Activated CD4-positive, alpha-beta memory T cell treated with anti-CD3 and anti-CD28 coated beads for 36 hours (primary cell): ENCODE measurements at regions of chr13 and their contacts with region 1.

Region 1: GRCh38 chr13:30968846-30969245 is 36.4 kb downstream of the TEX26 start:
- DNase-seq: no peak
- H3K4me3 Mint-ChIP-seq: no peak overlapping the region
- H3K27ac Mint-ChIP-seq: no peak overlapping the region
- H3K4me1 Mint-ChIP-seq: no peaks in the 10 kb centered on the region
- H3K27me3 Mint-ChIP-seq: peaks cover 26% of the 10 kb centered on the region

Region 2: DNA sequence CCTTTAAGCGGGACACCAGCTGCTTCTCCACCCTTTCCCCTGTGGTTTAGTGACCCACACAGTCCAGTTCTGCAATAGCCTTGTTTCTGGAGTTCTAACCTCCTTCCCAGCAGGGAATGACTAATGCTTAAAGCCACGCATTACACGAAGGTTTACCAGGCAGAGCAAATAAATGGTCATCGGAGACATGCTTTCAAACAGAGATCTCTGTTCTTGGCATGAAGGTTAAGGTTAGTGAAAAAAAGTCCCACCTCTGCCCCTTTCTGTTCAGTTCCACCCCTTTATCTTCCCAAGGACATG is 88.0 kb before region 1 on chr13:
- CTCF ChIA-PET with region 1: no interaction called
- POLR2A ChIA-PET with region 1: no interaction called
- intact Hi-C with region 1: no loop called
- DNase-seq: no peak
- H3K4me3 Mint-ChIP-seq: no peak overlapping the region
- H3K27ac Mint-ChIP-seq: no peak overlapping the region
- H3K4me1 Mint-ChIP-seq: peaks cover 13% of the 10 kb centered on the region
- H3K27me3 Mint-ChIP-seq: peaks cover 16% of the 10 kb centered on the region

Region 3: DNA sequence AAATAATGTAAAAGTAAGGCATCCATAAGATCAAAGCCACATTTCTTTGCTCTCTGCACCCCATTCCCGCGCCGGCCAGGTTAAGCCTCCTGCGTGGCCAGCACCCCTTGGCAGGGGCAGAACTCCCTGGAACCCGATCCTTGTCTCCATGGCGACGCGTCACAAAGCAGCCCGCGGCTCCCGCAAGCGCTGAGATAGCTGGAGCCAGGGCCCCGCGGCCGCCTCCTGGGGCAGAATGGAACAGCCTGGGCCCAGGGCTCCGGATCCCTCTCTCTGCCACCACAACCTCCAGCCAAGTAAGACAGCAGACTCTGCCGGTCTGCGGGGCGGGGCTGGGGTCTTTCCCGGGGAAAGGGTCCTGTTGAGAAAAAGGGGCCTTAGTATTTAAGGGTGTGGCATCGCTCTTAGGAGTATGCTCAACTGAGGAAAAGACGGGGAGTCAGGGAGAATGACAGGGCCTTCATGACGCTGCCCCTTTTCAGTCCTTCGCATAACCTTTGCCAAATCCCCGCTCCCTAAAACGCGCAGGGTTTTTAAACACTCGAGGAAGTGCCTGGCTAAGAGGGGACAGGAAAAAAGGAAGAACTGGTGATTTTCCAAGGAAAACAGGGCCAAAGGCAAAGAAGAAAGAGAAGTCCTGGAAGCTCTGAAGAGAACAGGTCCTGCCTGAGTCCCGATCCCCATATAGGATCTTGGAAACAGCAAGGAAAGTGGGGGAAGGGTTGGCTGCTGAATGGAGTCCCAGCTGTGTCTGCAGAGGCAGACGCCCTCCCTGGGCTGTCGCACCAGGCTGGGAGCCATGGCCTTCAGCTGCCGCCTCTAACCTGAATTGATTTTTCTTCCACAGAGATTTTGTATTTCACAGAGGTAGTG is 36.1 kb before region 1 on chr13 and contains the start of gene TEX26:
- CTCF ChIA-PET with region 1: no interaction called
- POLR2A ChIA-PET with region 1: no interaction called
- intact Hi-C with region 1: no loop called
- DNase-seq: no peak
- H3K4me3 Mint-ChIP-seq: no peak within 1 kb of the TSS
- H3K27ac Mint-ChIP-seq: no peak within 1 kb of the TSS
- H3K4me1 Mint-ChIP-seq: no peaks in the 10 kb centered on the region
- H3K27me3 Mint-ChIP-seq: peaks cover 42% of the 10 kb centered on the region
- total RNA-seq, gene TEX26: not detected

Region 4: DNA sequence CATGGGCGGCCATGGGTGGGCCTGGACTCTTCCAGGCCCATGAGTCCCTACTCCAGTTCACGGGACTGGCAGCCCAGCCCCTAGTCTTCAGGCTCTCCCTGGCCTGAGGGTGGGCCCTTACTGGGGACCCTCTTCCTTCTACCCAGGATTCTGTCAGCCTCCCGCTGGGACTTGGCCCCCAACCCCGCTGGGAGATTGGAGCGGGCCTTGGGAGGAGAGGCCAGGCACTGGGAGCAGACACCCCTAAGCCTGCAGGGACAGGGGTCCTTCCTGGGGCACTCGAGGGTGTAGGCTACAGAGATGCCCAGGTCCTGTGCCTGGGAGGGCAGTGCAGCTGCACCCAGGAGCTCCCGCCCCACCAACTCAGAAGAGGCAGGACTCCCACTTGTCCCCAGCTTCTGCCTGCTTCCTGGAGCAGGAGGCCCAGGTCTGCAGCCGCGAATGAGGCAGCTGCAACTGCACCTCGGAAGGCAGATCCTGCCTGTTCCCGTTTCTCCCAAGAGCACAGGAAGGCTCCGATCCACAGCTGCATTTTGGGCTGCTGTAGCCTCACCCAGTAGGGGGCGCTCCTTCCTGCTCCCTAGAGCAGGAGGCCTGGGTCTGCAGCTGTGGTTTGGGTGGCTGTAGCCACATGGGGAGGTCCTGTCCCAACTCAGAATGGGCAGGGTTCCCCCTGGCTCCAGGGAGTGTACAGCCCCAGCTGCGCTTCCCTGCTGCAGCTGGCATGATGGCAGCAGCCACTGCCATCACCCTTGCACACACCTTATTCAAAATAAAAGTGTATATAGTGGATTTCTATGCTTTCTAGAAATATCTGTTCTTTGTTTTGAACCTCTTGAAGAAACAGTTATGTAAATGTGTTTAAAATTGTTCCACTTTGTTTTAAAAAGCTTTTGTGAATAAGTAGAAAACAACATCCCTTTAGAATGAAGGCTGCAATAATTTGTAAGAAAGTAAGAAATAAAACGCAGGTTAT is 10.4 kb after region 1 on chr13:
- CTCF ChIA-PET with region 1: interaction called, 38 read pairs
- POLR2A ChIA-PET with region 1: no interaction called
- intact Hi-C with region 1: no loop called
- DNase-seq: peak; percentile 57
- H3K4me3 Mint-ChIP-seq: no peak overlapping the region
- H3K27ac Mint-ChIP-seq: no peak overlapping the region
- H3K4me1 Mint-ChIP-seq: no peaks in the 10 kb centered on the region
- H3K27me3 Mint-ChIP-seq: peaks cover 7% of the 10 kb centered on the region